Activated naive CD4-positive, alpha-beta T cell treated with anti-CD3 and anti-CD28 coated beads, Interleukin-2, amount 10 ng/mL, durations not matched to agents 7 days and 5 days (primary cell): ENCODE measurements at regions of chr3 and their contacts with region 1.

Region 1: DNA sequence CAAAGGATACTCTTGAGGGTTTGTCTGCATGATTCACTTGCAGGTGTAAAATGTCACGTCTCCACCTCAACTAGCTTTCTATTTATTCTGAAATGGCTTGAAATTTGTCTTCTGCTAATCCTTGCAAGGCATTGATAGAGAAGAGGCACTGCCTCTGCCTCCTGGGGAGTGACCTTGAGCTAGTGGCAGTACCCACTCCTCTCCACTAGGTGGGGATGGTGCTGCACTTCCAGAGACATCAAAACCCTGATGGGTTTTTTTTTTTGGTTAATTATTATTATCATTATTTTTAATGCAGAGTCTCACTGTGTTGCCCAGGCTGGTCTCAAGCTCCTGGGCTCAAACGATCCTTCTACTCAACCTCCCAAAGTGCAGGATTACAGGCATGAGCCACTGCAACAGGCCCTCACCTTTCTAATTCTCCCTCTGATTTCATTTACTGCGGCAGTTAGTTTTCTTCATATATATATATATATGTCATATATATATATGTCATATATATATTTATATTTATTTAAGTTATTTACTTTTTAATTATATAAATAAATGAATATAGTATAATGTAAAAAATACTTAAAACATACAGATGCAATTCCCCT is 117.6 kb upstream of the EIF1B start:
- DNase-seq: peak; percentile 66
- H3K4me3 Mint-ChIP-seq: no peak overlapping the region
- H3K27ac Mint-ChIP-seq: no peak overlapping the region
- H3K4me1 Mint-ChIP-seq: no peaks in the 10 kb centered on the region
- H3K27me3 Mint-ChIP-seq: no peaks in the 10 kb centered on the region

Region 2: DNA sequence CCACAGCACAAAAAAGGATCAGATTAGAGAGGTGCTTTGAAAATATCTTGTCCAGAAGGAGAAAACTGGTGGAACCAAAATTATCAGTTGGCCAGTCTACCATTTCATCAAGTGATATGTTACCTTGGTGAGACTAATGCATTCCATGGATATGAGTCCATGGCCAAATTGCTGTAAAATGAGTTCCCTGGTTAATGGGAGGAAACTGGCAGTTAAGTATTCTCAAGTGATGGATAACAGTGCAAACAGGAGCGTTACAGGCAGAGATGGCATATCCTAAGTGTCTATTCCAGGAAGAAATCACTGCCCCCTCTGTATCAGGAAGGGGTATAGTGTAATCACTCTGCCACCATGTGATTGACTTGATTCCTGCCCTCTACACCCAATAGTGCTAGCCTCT is 348.5 kb before region 1 on chr3:
- CTCF ChIA-PET with region 1: no interaction called
- DNase-seq: no peak
- H3K4me3 Mint-ChIP-seq: no peak overlapping the region
- H3K27ac Mint-ChIP-seq: no peak overlapping the region
- H3K4me1 Mint-ChIP-seq: no peaks in the 10 kb centered on the region
- H3K27me3 Mint-ChIP-seq: no peaks in the 10 kb centered on the region

Region 3: GRCh38 chr3:40179016-40179415 is 12.9 kb before region 1 on chr3:
- CTCF ChIA-PET with region 1: interaction called, 30 read pairs
- DNase-seq: peak; percentile 74
- H3K4me3 Mint-ChIP-seq: no peak overlapping the region
- H3K27ac Mint-ChIP-seq: no peak overlapping the region
- H3K4me1 Mint-ChIP-seq: no peaks in the 10 kb centered on the region
- H3K27me3 Mint-ChIP-seq: no peaks in the 10 kb centered on the region

Region 4: DNA sequence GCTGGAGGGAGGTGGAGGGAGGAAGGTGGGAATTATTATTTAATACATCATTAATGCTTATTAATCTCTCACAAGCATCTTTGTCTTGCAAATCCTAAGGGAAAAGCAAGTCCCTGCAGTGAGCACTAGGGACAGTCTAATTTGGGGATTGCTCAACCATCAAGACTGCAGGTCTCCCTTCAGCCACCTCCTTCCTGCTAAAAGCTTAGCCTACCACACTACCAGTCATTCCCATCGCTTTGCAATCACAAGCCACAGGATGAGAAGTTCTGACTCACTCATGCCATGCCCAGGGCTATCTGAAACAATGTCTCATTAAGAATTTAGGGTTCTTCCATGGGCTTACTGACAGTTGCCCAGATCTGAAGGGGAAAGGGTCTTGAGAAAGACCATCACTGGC is 66.6 kb after region 1 on chr3:
- CTCF ChIA-PET with region 1: no interaction called
- DNase-seq: no peak
- H3K4me3 Mint-ChIP-seq: no peak overlapping the region
- H3K27ac Mint-ChIP-seq: no peak overlapping the region
- H3K4me1 Mint-ChIP-seq: no peaks in the 10 kb centered on the region
- H3K27me3 Mint-ChIP-seq: no peaks in the 10 kb centered on the region

Region 5: GRCh38 chr3:40309418-40309924 is 117.5 kb after region 1 on chr3 and contains the start of gene EIF1B:
- CTCF ChIA-PET with region 1: interaction called, 90 read pairs
- DNase-seq: peak; percentile 98
- H3K4me3 Mint-ChIP-seq: peak within 1 kb of the TSS; percentile 100
- H3K27ac Mint-ChIP-seq: peak within 1 kb of the TSS; percentile 98
- H3K4me1 Mint-ChIP-seq: peaks cover 23% of the 10 kb centered on the region
- H3K27me3 Mint-ChIP-seq: no peaks in the 10 kb centered on the region

Region 6: DNA sequence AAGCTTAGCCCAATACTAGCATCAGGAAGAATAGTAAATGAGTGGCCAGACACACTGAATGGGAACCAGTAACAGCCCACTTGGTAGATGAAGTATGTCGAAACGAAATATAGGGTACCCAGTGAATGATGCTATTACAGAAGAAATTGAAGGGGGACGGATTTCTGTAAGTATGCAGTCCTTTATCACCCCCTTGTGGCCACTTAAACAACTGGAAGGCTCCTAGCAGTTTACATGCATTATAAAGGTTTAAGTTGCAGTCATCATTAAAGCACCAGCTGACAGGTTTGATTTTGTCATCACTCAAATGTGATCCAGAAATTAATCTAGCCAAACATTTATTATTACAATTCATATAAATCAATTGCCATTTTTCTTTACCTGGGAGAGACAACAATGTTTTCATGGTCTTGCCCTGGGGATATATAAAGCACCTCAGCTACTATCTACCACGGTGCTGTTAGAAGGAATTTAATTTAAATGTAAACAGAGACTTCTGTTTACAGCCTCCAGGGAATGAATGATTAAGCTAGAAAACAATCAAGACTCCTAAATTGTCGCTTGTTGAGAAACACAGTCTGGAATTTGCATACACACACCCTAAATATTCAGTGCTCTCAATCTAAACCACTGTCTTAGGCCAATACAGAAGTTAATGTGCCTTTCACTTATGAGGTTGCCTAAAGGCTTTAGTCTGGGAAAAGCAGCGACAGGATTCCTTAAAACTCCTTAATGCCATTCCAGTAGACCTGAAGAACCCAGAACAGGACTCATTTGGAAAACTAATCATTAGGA is 125.3 kb after region 1 on chr3:
- CTCF ChIA-PET with region 1: interaction called, 90 read pairs
- DNase-seq: peak; percentile 57
- H3K4me3 Mint-ChIP-seq: no peak overlapping the region
- H3K27ac Mint-ChIP-seq: no peak overlapping the region
- H3K4me1 Mint-ChIP-seq: peaks cover 2% of the 10 kb centered on the region
- H3K27me3 Mint-ChIP-seq: peaks cover 4% of the 10 kb centered on the region

Region 7: DNA sequence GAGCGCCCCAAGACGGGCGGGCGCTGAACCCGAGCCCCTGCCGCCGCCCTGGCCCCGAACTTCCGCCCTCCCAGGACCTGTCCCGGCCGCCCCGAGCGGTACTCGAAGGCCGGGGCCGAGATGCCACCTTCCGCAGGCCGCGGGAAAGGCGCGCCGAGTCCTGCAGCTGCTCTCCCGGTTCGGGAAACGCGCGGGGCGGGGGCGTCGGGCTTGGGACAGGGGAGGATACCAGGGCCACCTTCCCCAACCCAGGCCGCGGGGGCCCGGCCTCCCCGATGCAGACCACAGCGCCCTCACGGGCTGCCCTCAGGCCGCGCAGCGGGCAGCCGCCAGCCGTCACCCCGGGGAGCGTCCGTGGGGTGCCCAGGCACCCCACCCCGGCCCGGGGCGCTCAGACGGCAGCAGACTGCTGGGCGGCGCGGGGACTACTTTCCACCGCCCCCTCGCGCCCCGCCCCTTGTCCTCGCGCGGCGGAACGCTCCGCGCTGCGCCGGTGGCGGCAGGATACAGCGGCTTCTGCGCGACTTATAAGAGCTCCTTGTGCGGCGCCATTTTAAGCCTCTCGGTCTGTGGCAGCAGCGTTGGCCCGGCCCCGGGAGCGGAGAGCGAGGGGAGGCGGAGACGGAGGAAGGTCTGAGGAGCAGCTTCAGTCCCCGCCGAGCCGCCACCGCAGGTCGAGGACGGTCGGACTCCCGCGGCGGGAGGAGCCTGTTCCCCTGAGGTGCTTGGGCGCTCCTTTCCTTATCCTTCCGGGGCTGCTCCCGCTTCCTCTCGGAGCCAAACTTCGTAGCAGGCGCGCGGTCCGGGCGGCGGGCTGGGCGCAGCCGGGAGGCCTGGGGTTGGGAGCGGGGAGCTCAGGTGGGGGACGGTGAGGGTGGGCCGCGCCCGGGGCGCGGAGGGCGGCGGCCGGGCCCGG is 1007.3 kb after region 1 on chr3 and contains the start of gene CTNNB1:
- CTCF ChIA-PET with region 1: no interaction called
- DNase-seq: peak; percentile 90
- H3K4me3 Mint-ChIP-seq: peak within 1 kb of the TSS; percentile 96
- H3K27ac Mint-ChIP-seq: peak within 1 kb of the TSS; percentile 97
- H3K4me1 Mint-ChIP-seq: peaks cover 39% of the 10 kb centered on the region
- H3K27me3 Mint-ChIP-seq: peaks cover 12% of the 10 kb centered on the region